B cell (primary cell): ENCODE measurements at regions of chrX and their contacts with region 1.

Region 1: GRCh38 chrX:38985375-38985774 is 184.1 kb downstream of the MID1IP1 start:
- DNase-seq: peak; percentile 29
- ATAC-seq: peak; percentile 31
- H3K4me3 ChIP-seq: no peak overlapping the region
- H3K4me3 Mint-ChIP-seq: no peak overlapping the region
- H3K27ac ChIP-seq: no peak overlapping the region
- H3K27ac Mint-ChIP-seq: no peak overlapping the region
- H3K4me1 ChIP-seq: no peaks in the 10 kb centered on the region
- H3K4me1 Mint-ChIP-seq: no peaks in the 10 kb centered on the region
- H3K27me3 ChIP-seq: no peaks in the 10 kb centered on the region
- H3K27me3 Mint-ChIP-seq: peaks cover 3% of the 10 kb centered on the region
- CTCF ChIP-seq: peak; percentile 23

Region 2: GRCh38 chrX:38754102-38754790 is 231.1 kb before region 1 on chrX:
- CTCF ChIA-PET with region 1: interaction called, 8 read pairs
- POLR2A ChIA-PET with region 1: no interaction called
- intact Hi-C with region 1: loop called (anchors 5 kb)
- DNase-seq: peak; percentile 53
- ATAC-seq: peak; percentile 33
- H3K4me3 ChIP-seq: no peak overlapping the region
- H3K4me3 Mint-ChIP-seq: no peak overlapping the region
- H3K27ac ChIP-seq: no peak overlapping the region
- H3K27ac Mint-ChIP-seq: no peak overlapping the region
- H3K4me1 ChIP-seq: no peaks in the 10 kb centered on the region
- H3K4me1 Mint-ChIP-seq: no peaks in the 10 kb centered on the region
- H3K27me3 ChIP-seq: no peaks in the 10 kb centered on the region
- H3K27me3 Mint-ChIP-seq: peaks cover 9% of the 10 kb centered on the region
- CTCF ChIP-seq: peak; percentile 71

Region 3: DNA sequence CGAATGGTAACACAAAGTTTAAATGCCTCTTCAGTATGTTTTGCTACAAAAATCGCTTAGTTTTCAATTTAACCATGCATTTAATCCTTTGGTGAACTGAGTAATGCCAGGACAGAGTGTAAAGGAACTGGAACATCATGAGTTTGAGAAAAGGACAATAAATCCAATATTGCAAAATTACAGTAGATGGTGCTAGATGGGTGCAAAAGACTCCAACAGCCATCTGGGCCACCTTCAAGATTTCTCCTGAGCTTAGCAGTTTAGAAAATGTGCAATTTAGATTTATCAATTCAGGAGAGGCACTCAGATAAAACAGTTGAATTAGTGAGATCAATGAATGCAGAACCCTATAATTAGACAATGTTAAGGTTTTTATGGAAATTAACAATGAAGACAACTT is 217.3 kb before region 1 on chrX:
- CTCF ChIA-PET with region 1: interaction called, 21 read pairs
- POLR2A ChIA-PET with region 1: no interaction called
- intact Hi-C with region 1: loop called (anchors 1 kb)
- DNase-seq: peak; percentile 28
- ATAC-seq: no peak
- H3K4me3 ChIP-seq: no peak overlapping the region
- H3K4me3 Mint-ChIP-seq: no peak overlapping the region
- H3K27ac ChIP-seq: no peak overlapping the region
- H3K27ac Mint-ChIP-seq: no peak overlapping the region
- H3K4me1 ChIP-seq: no peaks in the 10 kb centered on the region
- H3K4me1 Mint-ChIP-seq: no peaks in the 10 kb centered on the region
- H3K27me3 ChIP-seq: no peaks in the 10 kb centered on the region
- H3K27me3 Mint-ChIP-seq: peaks cover 4% of the 10 kb centered on the region
- CTCF ChIP-seq: peak; percentile 53

Region 4: DNA sequence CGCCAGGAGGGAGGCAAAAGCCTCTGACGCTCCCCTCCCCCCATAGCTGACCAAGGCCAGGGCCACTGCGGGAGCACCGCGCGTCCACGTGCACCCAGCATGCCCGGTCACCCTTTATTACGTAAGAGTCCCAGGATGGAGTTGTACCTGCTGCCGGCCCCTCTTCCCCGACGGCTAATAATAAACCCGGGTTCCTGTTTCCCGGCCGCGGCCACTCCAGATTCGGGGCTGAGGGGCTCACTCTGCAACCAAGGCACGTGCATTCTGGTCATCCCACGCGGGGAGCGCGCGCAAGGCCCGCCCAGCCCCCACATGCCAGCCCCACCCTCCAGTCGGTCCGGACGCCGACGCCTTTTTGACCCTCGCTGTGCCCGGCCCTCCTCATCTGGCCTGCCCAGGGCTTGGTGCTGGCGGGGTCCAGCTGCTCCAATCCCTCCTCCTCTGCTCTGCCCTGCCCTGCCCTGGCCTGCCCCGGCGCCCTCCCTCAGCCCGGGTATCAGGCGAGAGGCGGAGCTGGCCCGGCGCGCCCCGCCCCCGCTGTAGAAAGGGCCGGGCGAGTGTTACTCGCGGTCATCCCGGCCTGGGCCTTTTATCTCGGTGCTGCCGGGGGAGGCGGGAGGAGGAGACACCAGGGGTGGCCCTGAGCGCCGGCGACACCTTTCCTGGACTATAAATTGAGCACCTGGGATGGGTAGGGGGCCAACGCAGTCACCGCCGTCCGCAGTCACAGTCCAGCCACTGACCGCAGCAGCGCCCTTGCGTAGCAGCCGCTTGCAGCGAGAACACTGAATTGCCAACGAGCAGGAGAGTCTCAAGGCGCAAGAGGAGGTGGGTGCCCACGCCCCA is 181.6 kb before region 1 on chrX:
- CTCF ChIA-PET with region 1: interaction called, 5 read pairs
- POLR2A ChIA-PET with region 1: no interaction called
- intact Hi-C with region 1: loop called (anchors 5 kb)
- DNase-seq: peak; percentile 56
- ATAC-seq: peak; percentile 68
- H3K4me3 ChIP-seq: peak overlapping the region; percentile 41 to 69 (median 64)
- H3K4me3 Mint-ChIP-seq: peak overlapping the region; percentile 91
- H3K27ac ChIP-seq: peak overlapping the region; percentile 78 to 82
- H3K27ac Mint-ChIP-seq: peak overlapping the region; percentile 88
- H3K4me1 ChIP-seq: peaks cover 14 to 32% of the 10 kb centered on the region in 2 donors
- H3K4me1 Mint-ChIP-seq: peaks cover 35% of the 10 kb centered on the region
- H3K27me3 ChIP-seq: peaks cover 0 to 2% (median 0%) of the 10 kb centered on the region in 4 experiments
- H3K27me3 Mint-ChIP-seq: peaks cover 3% of the 10 kb centered on the region
- CTCF ChIP-seq: no peak